Stomach (tissue), 19 donors: ENCODE measurements at regions of chr1 and their contacts with region 1.

Region 1: DNA sequence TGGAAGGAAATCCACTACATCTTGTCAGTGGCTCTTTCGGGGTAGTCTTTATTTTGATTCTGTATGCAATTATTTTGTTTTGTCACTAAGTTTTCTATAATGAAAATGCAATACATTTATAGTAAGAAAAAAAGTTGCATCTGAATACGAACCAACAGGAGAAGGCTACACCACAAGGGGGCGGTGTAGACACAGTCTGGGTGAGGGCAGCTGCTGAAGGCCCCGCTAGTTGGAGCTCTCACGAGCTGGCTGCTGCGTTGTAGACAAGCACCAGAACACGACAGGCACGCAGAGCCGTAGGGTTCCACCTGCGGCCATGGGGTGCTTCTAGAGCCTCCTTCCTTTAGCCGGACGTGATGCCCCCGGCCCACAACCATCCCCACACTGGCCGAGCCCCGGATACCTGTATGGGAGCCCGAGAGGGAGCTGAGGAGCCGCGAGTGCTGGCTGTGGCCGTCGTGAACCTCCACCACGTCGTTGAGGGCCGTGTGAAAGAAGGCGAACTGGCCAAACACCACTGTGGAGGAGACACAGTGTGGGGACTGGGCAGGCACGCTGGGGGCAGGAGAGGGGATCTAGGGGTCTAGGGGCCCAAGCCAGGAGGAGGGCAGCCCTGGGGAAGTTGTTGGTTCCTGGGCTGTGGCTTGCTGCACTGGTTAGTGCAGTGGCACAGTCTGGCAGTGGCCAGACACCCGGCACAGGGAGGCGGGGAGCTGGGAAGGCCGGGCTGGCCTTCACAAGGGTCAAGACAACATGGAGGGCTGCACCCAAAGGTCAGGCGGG is 160.8 kb downstream of the ZSCAN20 start:
- DNase-seq: peak; percentile 94 to 96
- H3K4me3 ChIP-seq: no peak overlapping the region
- H3K27ac ChIP-seq: no peak overlapping the region
- H3K4me1 ChIP-seq: peaks cover 0 to 10% (median 2%) of the 10 kb centered on the region in 4 donors
- H3K27me3 ChIP-seq: peaks cover 0 to 23% (median 0%) of the 10 kb centered on the region in 3 donors
- CTCF ChIP-seq: peak in 5 of 7 experiments; percentile 61 to 91 (median 86)
- EP300 ChIP-seq: no peak
- POLR2A ChIP-seq: no peak

Region 2: DNA sequence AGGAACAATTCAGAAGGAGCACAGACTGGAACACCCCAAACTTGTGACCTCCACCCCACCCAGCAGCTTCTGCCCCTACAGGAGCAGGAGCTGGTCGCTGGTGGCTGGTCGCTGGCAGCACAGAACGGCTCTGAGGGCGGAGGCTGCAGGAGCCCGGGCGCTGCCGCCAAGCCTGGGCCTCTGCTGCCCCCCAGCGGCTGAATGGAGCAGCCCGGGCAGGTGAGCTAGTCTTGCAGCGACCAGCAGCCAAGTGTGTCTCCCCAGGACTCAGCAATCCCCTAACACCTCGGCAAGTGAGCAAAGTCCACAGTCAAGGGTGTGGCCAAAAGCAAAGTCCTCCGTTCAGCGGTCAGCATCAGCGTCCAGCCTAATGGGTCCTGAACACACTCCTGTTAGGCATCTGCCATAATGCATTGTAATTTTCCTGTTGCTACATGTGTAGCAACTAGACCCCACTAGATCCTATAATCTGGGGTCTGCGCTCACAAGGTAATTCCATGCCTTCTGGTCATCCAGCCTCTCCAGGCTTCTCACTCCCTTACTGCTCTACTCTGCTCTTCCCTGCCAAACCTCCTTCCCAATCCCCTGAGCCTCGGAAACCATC is 1109.6 kb after region 1 on chr1:
- intact Hi-C with region 1: loop called (anchors 5 kb)
- DNase-seq: peak; percentile 86 to 94
- H3K4me3 ChIP-seq: no peak overlapping the region
- H3K27ac ChIP-seq: no peak overlapping the region
- H3K4me1 ChIP-seq: peaks cover 4 to 10% (median 6%) of the 10 kb centered on the region in 4 donors
- H3K27me3 ChIP-seq: peaks cover 0 to 57% (median 8%) of the 10 kb centered on the region in 3 donors
- CTCF ChIP-seq: peak in 5 of 7 experiments; percentile 46 to 92 (median 84)
- EP300 ChIP-seq: no peak
- POLR2A ChIP-seq: no peak